HCT116 (cell line): ENCODE measurements at regions of chr4 and their contacts with region 1.

Region 1: GRCh38 chr4:2765832-2766526 is 9.8 kb upstream of the TNIP2 start:
- DNase-seq: no peak
- ATAC-seq: no peak
- H3K4me3 ChIP-seq: no peak overlapping the region
- H3K27ac ChIP-seq: no peak overlapping the region
- H3K4me1 ChIP-seq: peaks cover 7 to 23% of the 10 kb centered on the region in 2 experiments
- H3K27me3 ChIP-seq: no peaks in the 10 kb centered on the region
- CTCF ChIP-seq: no peak
- POLR2A ChIP-seq: no peak
- RAD21 ChIP-seq: no peak

Region 2: GRCh38 chr4:2934813-2935761 is 169.1 kb after region 1 on chr4:
- CTCF ChIA-PET with region 1: interaction called, 3 read pairs
- POLR2A ChIA-PET with region 1: interaction called, 3 read pairs
- RAD21 ChIA-PET with region 1: interaction called in 1 of 2 experiments, 5 read pairs
- intact Hi-C with region 1: loop called (anchors 2 kb)
- DNase-seq: peak; percentile 77
- ATAC-seq: peak; percentile 49
- H3K4me3 ChIP-seq: peak overlapping the region; percentile 95 to 98
- H3K27ac ChIP-seq: peak overlapping the region; percentile 96
- H3K4me1 ChIP-seq: peaks cover 24 to 45% of the 10 kb centered on the region in 2 experiments
- H3K27me3 ChIP-seq: no peaks in the 10 kb centered on the region
- CTCF ChIP-seq: no peak
- POLR2A ChIP-seq: peak; percentile 91
- RAD21 ChIP-seq: no peak

Region 3: GRCh38 chr4:3037957-3038461 is 272.0 kb after region 1 on chr4:
- CTCF ChIA-PET with region 1: interaction called, 6 read pairs
- POLR2A ChIA-PET with region 1: no interaction called
- RAD21 ChIA-PET with region 1: no interaction called
- intact Hi-C with region 1: loop called (anchors 2 kb)
- DNase-seq: no peak
- ATAC-seq: no peak
- H3K4me3 ChIP-seq: no peak overlapping the region
- H3K27ac ChIP-seq: no peak overlapping the region
- H3K4me1 ChIP-seq: peaks cover 0 to 10% of the 10 kb centered on the region in 2 experiments; a peak in 2 of 4 replicates
- H3K27me3 ChIP-seq: no peaks in the 10 kb centered on the region
- CTCF ChIP-seq: no peak
- POLR2A ChIP-seq: no peak
- RAD21 ChIP-seq: no peak

Region 4: DNA sequence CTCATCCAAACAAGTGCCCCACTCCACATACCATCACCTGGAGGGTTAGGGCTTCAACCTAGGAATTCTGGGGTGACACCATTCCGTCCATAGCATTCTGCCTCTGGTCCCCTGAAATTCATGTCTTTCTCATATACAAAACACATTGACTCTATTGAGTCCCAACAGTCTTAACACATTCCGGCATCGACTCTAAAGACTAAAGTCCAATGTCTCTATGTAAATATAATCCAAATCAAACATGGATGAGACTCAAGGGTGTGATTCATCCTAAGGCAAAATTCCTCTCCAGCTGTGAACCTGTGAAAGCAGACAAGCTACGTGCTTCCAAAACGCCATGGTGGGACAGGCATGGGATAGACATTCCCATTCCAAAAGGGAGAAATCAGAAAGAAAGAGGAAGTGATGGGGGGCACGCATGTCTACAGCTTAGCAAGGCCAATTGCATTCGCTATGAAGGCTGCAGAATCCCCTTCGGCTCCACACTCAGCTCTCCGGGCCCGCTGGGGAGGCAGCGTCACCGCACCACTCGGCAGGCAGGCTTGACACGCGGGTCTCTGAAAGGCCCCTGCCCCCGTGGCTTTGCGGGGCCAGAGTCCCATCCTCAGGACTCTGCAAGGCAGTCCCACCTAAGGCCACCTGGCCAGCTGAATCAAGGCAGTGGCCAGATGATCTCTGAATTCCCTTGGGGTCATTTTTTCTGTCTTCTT is 1053.4 kb after region 1 on chr4:
- CTCF ChIA-PET with region 1: no interaction called
- POLR2A ChIA-PET with region 1: no interaction called
- RAD21 ChIA-PET with region 1: no interaction called
- intact Hi-C with region 1: no loop called
- DNase-seq: no peak
- ATAC-seq: no peak
- H3K4me3 ChIP-seq: no peak overlapping the region
- H3K27ac ChIP-seq: no peak overlapping the region
- H3K4me1 ChIP-seq: no peaks in the 10 kb centered on the region; a peak in 1 of 4 replicates
- H3K27me3 ChIP-seq: no peaks in the 10 kb centered on the region
- CTCF ChIP-seq: no peak
- POLR2A ChIP-seq: no peak
- RAD21 ChIP-seq: no peak